Panc1 (cell line): ENCODE measurements at regions of chr2 and their contacts with region 1.

Region 1: GRCh38 chr2:70310899-70311298 is 9.0 kb upstream of the FAM136A start:
- DNase-seq: no peak
- ATAC-seq: no peak
- H3K4me3 ChIP-seq: no peak overlapping the region
- H3K27ac ChIP-seq: no peak overlapping the region
- H3K4me1 ChIP-seq: no peaks in the 10 kb centered on the region
- H3K27me3 ChIP-seq: no peaks in the 10 kb centered on the region
- CTCF ChIP-seq: no peak

Region 2: DNA sequence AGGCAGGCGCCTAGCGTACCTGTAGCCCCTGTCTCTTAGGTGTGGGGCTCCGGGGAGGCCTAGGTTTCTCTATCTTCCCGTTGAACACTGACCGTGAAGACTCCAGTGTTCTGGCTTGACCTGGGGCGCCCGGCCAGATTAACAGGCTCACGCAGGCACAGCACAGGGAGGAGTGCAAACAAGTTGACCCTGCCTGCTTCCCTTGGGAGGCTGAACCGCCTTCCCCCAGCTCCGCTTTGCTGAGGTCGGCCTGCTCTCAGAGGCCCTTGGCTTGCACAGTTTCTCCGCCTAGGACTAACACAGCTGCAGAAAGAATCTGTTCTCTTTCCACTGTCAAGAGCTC is 52.4 kb before region 1 on chr2:
- CTCF ChIA-PET with region 1: no interaction called
- POLR2A ChIA-PET with region 1: no interaction called
- in situ Hi-C with region 1: no loop called
- intact Hi-C with region 1: no loop called
- DNase-seq: no peak
- ATAC-seq: peak; percentile 45
- H3K4me3 ChIP-seq: peak overlapping the region; percentile 69 to 98
- H3K27ac ChIP-seq: peak overlapping the region; percentile 25
- H3K4me1 ChIP-seq: 0 out of 2 replicates have a peak, but pooled peaks cover 5% of the 10 kb centered on the region
- H3K27me3 ChIP-seq: no peaks in the 10 kb centered on the region
- CTCF ChIP-seq: no peak

Region 3: DNA sequence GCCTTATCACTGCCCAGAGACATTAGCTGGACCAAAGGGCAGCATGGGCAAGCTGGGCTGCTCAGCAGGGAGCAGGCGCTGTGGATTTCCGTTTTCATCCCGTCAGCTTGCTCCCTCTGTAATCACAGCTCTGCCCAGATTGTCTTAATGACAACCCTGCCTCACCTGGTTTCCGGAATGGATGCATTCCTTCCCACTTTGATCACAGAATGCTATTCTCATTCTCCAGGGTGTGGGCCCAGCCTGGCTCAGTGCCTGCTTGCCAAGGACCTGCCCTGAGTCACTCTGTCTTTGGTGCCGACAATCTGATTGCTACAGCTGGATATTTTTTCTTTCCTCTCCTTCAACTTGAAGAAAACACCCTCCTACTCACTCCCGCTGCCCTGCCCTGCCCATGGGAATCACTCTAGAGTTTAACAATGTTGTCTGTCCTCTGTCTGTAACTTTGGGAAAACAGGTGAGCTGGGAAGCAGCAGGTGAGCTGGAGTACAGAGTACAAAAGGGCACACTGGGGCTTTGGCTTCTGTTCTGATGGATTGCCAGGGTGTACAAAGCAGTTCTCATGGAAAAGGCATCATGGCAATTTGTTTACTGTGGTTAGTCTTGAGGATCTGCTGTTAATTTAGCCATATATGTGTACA is 18.1 kb after region 1 on chr2:
- CTCF ChIA-PET with region 1: no interaction called
- POLR2A ChIA-PET with region 1: interaction called, 12 read pairs
- in situ Hi-C with region 1: no loop called
- intact Hi-C with region 1: no loop called
- DNase-seq: peak; percentile 12
- ATAC-seq: peak; percentile 60
- H3K4me3 ChIP-seq: no peak overlapping the region
- H3K27ac ChIP-seq: no peak overlapping the region
- H3K4me1 ChIP-seq: peaks cover 4% of the 10 kb centered on the region; the same call in 1 of the 2 replicates
- H3K27me3 ChIP-seq: no peaks in the 10 kb centered on the region
- CTCF ChIP-seq: no peak

Region 4: GRCh38 chr2:70570041-70570663 is 259.3 kb after region 1 on chr2:
- CTCF ChIA-PET with region 1: no interaction called
- POLR2A ChIA-PET with region 1: no interaction called
- in situ Hi-C with region 1: no loop called
- intact Hi-C with region 1: no loop called
- DNase-seq: no peak
- ATAC-seq: peak; percentile 74
- H3K4me3 ChIP-seq: no peak overlapping the region
- H3K27ac ChIP-seq: no peak overlapping the region
- H3K4me1 ChIP-seq: no peaks in the 10 kb centered on the region
- H3K27me3 ChIP-seq: peaks cover 22% of the 10 kb centered on the region
- CTCF ChIP-seq: no peak